A549 (cell line): ENCODE measurements at regions of chr11 and their contacts with region 1.

Region 1: GRCh38 chr11:20110908-20111669 is 49.2 kb downstream of the DBX1 start:
- DNase-seq: peak; percentile 70 to 85
- ATAC-seq: peak; percentile 56 to 78
- H3K4me3 ChIP-seq: no peak overlapping the region
- H3K27ac ChIP-seq: peak overlapping the region; percentile 98
- H3K4me1 ChIP-seq: peaks cover 42% of the 10 kb centered on the region
- CTCF ChIP-seq: peak; percentile 83
- EP300 ChIP-seq: no peak; a peak in 1 of 5 replicates
- POLR2A ChIP-seq: no peak
- RAD21 ChIP-seq: peak; percentile 73 to 81

Region 2: DNA sequence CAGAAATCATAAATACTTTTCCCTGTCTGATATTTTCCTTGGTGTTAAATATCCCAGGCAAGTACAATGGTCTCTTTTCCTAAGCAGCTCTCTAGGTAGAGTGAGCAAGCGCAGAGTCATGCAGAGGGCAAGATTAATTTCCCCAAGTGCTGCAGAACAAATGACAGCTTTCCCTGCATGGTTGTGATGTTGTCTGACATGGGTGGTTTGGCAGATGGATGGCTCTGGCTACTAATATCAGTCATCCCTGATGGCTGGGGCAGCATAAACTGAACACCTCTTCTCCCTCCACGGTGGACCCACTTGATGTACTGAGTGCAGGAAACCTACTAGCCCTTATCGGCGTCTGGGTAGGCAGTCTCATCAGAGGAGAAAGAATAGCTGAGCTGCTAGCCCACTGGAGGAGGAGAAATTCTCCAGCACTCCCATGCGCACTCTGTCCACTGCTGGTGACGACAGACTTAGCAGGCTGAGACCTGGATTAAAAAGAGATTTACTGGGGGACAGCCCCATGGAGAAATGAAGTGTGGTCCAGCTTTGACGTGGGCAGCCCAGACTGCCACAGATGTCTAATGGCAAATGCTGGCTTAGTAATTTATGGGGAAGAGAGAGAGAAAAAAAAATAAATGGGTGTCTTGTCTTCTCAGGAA is 153.7 kb before region 1 on chr11:
- CTCF ChIA-PET with region 1: interaction called, 108 read pairs
- POLR2A ChIA-PET with region 1: interaction called, 9 read pairs
- DNase-seq: no peak
- ATAC-seq: no peak
- H3K4me3 ChIP-seq: no peak overlapping the region
- H3K27ac ChIP-seq: peak overlapping the region; percentile 0 to 17; a peak in 3 of 6 replicates
- H3K4me1 ChIP-seq: peaks cover 32% of the 10 kb centered on the region
- CTCF ChIP-seq: no peak
- EP300 ChIP-seq: no peak
- POLR2A ChIP-seq: no peak
- RAD21 ChIP-seq: no peak

Region 3: GRCh38 chr11:20022363-20023081 is 88.6 kb before region 1 on chr11:
- CTCF ChIA-PET with region 1: interaction called, 19 read pairs
- POLR2A ChIA-PET with region 1: no interaction called
- DNase-seq: peak; percentile 33 to 50
- ATAC-seq: peak; percentile 57 to 72; a peak in 4 of 6 replicates
- H3K4me3 ChIP-seq: peak overlapping the region; percentile 49
- H3K27ac ChIP-seq: peak overlapping the region; percentile 91 to 92
- H3K4me1 ChIP-seq: peaks cover 73% of the 10 kb centered on the region
- CTCF ChIP-seq: no peak
- EP300 ChIP-seq: no peak
- POLR2A ChIP-seq: no peak
- RAD21 ChIP-seq: no peak

Region 4: DNA sequence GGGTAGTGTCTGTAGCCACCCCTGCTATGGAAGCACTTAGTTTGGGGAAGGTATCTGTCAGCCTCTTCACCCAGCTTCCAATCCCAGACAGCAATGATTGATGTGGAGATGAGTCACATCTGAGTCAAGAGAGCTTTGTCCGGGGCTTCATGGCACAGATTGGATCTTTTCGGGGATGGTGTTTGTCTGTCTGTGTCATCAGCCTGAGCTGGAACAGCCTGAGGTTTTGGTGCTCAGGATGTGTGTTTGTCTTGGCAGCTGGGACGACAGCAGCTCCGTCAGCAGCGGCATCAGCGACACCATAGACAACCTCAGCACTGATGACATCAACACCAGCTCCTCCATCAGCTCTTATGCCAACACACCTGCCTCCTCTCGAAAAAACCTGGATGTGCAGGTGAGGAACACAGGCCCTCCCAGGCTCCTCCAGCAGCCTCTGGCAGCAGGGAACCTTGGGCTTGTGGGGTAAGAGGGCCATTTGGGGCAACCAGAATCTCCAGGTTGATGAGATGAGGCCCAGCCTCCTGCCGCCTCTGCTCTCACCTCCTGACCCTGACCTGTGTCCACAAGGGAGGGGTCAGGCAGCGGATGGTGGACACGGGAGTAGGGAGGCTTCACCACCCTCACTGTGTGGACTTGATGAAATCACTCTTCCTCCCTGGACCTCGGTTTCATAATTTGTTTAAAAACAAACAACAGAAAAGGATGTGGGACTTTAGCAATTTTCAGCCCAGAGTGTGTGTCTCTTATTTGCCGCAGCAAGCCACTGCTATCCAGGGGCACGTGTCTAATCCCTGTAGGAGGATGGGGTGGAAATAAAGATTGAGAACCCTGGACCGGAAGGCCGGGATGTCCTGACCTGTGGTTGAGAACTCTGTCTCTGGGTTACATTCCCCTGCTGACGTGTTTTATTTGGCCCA is 75.1 kb before region 1 on chr11:
- CTCF ChIA-PET with region 1: interaction called, 17 read pairs
- POLR2A ChIA-PET with region 1: interaction called, 15 read pairs
- DNase-seq: peak; percentile 96
- ATAC-seq: peak; percentile 94
- H3K4me3 ChIP-seq: no peak overlapping the region
- H3K27ac ChIP-seq: peak overlapping the region; percentile 85 to 93
- H3K4me1 ChIP-seq: peaks cover 78% of the 10 kb centered on the region
- CTCF ChIP-seq: 0 out of 3 replicates have a peak, but pooled peaks have one; percentile 11
- EP300 ChIP-seq: peak; percentile 88 to 90; a peak in 4 of 5 replicates
- POLR2A ChIP-seq: no peak
- RAD21 ChIP-seq: peak; percentile 8 to 48; a peak in 4 of 5 replicates

Region 5: DNA sequence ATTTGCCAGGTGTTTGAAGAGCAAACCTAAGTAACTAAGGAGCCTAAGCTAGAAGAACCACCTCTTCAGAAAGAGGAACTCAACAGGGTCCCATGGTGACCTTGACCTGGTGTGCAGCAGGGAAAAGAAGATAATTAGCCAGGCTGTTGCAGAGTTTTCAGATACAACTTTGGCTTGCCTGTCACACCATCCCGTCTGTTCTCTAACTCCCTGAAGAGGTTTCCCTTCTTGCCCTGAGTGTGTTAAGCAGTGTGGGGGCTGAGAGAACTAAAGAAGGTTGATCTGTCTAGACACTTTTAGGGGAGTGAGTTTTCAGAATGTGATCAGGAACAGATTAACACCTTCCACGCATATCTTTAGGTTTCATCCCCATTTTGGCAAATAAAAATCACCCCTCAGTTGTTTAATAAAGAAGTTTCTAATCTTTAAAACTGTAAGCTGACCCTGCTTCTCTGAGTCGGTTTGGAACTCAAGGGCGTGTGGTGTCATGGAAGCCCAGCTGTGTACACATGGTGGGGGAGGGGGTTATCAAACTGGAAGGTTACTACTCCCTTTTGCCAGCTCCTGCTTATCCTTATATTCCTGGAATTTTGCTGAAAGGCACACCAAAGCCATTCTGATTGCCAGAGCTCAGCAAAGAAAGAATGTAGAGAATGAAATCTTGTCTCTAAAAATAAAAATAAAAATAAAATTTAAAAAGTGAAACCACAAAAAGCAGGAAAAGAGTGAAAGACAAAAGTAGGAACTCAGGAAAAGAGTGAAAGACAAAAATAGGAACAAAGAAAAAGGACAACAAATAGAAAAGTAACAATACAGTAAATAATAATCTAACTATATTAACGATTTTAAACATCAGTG is 21.1 kb before region 1 on chr11:
- CTCF ChIA-PET with region 1: interaction called, 50 read pairs
- POLR2A ChIA-PET with region 1: no interaction called
- DNase-seq: no peak
- ATAC-seq: no peak
- H3K4me3 ChIP-seq: no peak overlapping the region
- H3K27ac ChIP-seq: no peak overlapping the region; a peak in 1 of 6 replicates
- H3K4me1 ChIP-seq: peaks cover 11% of the 10 kb centered on the region; the same call in 2 of the 3 replicates
- CTCF ChIP-seq: no peak
- EP300 ChIP-seq: no peak
- POLR2A ChIP-seq: no peak
- RAD21 ChIP-seq: no peak

Region 6: DNA sequence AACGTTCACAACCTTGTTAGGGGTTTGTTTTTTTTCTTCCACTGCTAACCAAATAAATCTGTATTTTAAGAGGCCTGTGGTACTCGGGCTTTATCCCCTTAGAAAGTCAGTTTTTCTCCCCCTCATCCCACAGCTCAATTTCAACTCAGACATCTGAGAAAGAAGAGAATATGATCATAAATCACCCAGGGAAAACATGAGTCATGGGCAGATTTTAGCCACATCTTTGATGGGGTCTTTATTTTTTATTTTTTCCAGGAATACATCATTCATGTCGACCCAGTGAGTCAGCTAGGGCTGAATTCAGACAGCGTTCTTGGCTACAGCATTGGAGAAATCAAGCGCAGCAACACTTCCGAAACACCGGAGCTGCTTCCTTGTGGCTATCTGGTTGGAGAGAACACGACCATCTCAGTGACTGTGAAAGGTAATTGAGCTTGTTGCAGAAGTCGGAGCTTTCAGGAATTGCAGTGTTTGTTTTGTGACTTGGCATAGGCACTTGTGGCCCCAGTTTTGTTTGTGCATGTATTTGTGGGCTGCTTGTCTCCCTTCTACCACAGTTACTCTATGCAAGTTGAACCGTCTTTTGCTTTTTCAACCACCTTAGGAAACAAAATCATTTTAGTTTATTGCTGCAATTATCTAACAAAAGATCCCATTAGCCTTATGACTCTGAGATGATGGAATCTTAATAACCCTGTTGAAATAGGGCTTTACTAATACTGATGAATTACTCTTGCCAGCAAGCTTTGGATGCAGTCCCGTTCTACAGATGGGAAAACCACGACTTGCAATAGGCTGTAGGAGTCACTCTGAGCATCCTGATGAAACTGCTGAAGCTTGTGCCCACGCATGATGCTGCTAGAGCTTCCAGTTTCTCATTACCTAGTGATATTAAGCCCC is 13.5 kb before region 1 on chr11:
- CTCF ChIA-PET with region 1: interaction called, 50 read pairs
- POLR2A ChIA-PET with region 1: no interaction called
- DNase-seq: no peak
- ATAC-seq: no peak; a peak in 1 of 6 replicates
- H3K4me3 ChIP-seq: no peak overlapping the region
- H3K27ac ChIP-seq: peak overlapping the region in 1 of 2 experiments; percentile 37; a peak in 1 of 6 replicates
- H3K4me1 ChIP-seq: peaks cover 12% of the 10 kb centered on the region
- CTCF ChIP-seq: no peak
- EP300 ChIP-seq: no peak
- POLR2A ChIP-seq: no peak
- RAD21 ChIP-seq: no peak

Region 7: GRCh38 chr11:20363500-20364411 is 252.7 kb after region 1 on chr11 and contains the start of gene HTATIP2:
- CTCF ChIA-PET with region 1: no interaction called
- POLR2A ChIA-PET with region 1: no interaction called
- DNase-seq: peak; percentile 66 to 68
- ATAC-seq: peak; percentile 84 to 87
- H3K4me3 ChIP-seq: peak within 1 kb of the TSS; percentile 63
- H3K27ac ChIP-seq: peak within 1 kb of the TSS; percentile 92 to 100
- H3K4me1 ChIP-seq: peaks cover 46% of the 10 kb centered on the region
- CTCF ChIP-seq: no peak
- EP300 ChIP-seq: no peak
- POLR2A ChIP-seq: peak; percentile 58
- RAD21 ChIP-seq: no peak
- polyA plus RNA-seq, gene HTATIP2: 238 and 308 TPM in 2 replicates

Region 8: DNA sequence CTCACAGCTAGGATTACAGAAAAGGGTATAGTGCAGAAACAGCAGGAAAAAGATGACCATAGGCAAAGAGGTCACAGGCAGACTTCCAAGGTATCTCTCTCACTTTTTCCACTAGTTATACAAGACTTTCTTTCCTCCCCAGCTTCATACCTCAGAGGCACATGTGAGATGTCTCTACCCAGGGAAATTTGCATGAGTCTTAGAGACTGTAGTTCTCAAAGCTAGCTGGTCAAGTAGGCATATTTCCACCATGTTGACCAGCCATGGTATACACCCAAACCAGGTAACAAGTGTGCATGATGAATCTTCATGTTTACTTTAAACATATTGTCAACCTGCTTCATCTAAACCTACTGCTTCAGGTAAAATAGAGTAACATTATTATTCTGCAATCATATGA is 304.3 kb after region 1 on chr11:
- CTCF ChIA-PET with region 1: no interaction called
- POLR2A ChIA-PET with region 1: no interaction called
- DNase-seq: no peak
- ATAC-seq: no peak
- H3K4me3 ChIP-seq: no peak overlapping the region
- H3K27ac ChIP-seq: no peak overlapping the region
- H3K4me1 ChIP-seq: no peaks in the 10 kb centered on the region
- CTCF ChIP-seq: no peak
- EP300 ChIP-seq: no peak
- POLR2A ChIP-seq: no peak
- RAD21 ChIP-seq: no peak